ENCODE measurements at regions of chr20 and their contacts with region 1.

Region 1: GRCh38 chr20:10434832-10435812 is at the start of gene SLX4IP:
- DNase-seq: peak; percentile 88
- ATAC-seq: peak; percentile 68
- H3K4me3 Mint-ChIP-seq: peak within 1 kb of the TSS; percentile 78
- H3K27ac Mint-ChIP-seq: peak within 1 kb of the TSS; percentile 87
- H3K4me1 Mint-ChIP-seq: peaks cover 39% of the 10 kb centered on the region
- H3K27me3 Mint-ChIP-seq: no peaks in the 10 kb centered on the region
- total RNA-seq, gene SLX4IP: 7.4 to 7.8 TPM

Region 2: GRCh38 chr20:9903048-9903655 is 532.0 kb before region 1 on chr20:
- CTCF ChIA-PET with region 1: no interaction called
- POLR2A ChIA-PET with region 1: no interaction called
- intact Hi-C with region 1: no loop called
- DNase-seq: peak; percentile 13
- ATAC-seq: no peak
- H3K4me3 Mint-ChIP-seq: no peak overlapping the region
- H3K27ac Mint-ChIP-seq: no peak overlapping the region
- H3K4me1 Mint-ChIP-seq: no peaks in the 10 kb centered on the region
- H3K27me3 Mint-ChIP-seq: no peaks in the 10 kb centered on the region

Region 3: GRCh38 chr20:10034717-10035571 is 400.2 kb before region 1 on chr20 and contains the start of gene ANKEF1:
- CTCF ChIA-PET with region 1: no interaction called
- POLR2A ChIA-PET with region 1: no interaction called
- intact Hi-C with region 1: loop called in 1 of 2 experiments (anchors 10 kb)
- DNase-seq: peak; percentile 76
- ATAC-seq: peak; percentile 92
- H3K4me3 Mint-ChIP-seq: peak within 1 kb of the TSS; percentile 54
- H3K27ac Mint-ChIP-seq: peak within 1 kb of the TSS; percentile 55
- H3K4me1 Mint-ChIP-seq: peaks cover 7% of the 10 kb centered on the region
- H3K27me3 Mint-ChIP-seq: peaks cover 7% of the 10 kb centered on the region
- total RNA-seq, gene ANKEF1: 2.5 to 2.8 TPM

Region 4: DNA sequence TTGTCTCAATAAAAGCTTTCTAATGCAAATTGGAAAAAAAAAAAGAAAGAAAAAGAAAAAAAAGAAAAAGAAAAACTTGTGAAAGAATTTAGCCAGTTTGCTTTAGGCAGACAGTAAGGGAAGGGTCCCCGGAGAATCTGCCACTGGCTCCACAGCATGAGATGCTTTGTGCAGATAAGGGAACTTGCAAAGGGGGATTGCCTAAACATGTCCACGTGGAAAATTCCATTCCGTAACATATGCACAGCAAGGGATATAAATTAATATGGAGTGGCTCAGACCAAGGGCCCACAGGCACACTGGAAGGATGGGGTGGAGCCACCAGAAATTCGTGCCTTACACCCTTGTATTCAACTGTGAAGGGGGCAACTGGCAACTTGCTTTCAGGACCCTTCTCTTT is 46.5 kb before region 1 on chr20:
- CTCF ChIA-PET with region 1: no interaction called
- POLR2A ChIA-PET with region 1: no interaction called
- intact Hi-C with region 1: no loop called
- DNase-seq: no peak
- ATAC-seq: no peak
- H3K4me3 Mint-ChIP-seq: no peak overlapping the region
- H3K27ac Mint-ChIP-seq: no peak overlapping the region
- H3K4me1 Mint-ChIP-seq: no peaks in the 10 kb centered on the region
- H3K27me3 Mint-ChIP-seq: peaks cover 6% of the 10 kb centered on the region

Region 5: DNA sequence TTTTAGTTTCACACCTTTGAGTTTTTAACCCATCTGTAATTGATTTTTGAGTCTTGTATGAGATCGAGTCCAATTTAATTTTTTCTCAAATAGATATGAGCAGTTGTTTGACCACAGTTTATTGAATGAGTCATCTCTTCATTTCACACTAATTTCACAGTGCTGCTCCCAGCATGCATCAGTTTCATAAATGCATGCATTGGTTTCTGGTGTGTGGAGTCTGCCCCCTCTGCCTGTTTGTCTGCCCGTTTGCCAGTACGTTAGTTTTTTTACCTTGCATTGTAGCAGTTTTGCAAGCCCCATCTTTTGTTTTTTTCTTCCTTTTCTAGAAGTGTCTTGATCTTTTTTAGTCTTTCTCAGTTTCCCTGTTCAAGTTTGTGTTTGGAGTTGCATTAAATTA is 11.9 kb after region 1 on chr20:
- CTCF ChIA-PET with region 1: interaction called, 6 read pairs
- POLR2A ChIA-PET with region 1: interaction called, 3 read pairs
- intact Hi-C with region 1: loop called in 1 of 2 experiments (anchors 1 kb)
- DNase-seq: peak; percentile 71
- ATAC-seq: peak; percentile 99
- H3K4me3 Mint-ChIP-seq: peak overlapping the region; percentile 61
- H3K27ac Mint-ChIP-seq: peak overlapping the region; percentile 80
- H3K4me1 Mint-ChIP-seq: peaks cover 27% of the 10 kb centered on the region
- H3K27me3 Mint-ChIP-seq: no peaks in the 10 kb centered on the region

Region 6: DNA sequence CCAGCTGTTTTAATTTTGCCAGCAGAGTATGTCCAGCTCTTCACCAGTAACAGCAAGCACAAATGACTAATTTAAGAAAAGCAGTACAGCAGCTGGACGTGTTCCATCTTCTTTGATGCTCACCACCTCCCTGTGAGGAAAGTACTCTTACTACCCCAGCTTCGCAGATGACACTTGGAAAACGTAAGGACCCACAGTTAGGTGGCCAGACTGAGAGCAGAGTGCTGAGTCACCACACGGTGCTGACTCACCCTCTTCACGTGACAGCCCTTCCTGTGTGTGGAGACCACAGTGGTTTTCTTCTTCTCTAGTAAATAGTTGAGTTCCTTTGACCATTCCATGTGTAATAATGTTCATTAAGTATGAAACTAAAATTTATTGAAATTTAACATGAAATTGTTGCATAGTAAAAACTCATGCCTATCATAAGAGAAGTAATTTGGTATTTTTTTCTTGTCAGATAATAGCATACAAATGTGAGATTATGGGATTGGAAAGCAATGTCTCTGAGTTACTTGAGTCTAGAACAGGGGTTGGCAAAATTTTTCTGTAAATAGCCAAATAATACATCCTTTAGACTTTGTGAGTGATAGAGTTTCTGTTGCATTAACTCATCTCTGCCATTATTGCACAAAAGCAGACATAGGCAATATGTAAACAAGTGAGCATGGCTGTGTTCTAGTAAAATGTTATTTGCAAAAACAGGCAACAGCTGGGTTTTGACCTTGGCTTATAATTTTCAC is 76.6 kb after region 1 on chr20:
- CTCF ChIA-PET with region 1: no interaction called
- POLR2A ChIA-PET with region 1: no interaction called
- intact Hi-C with region 1: loop called in 1 of 2 experiments (anchors 2 kb)
- DNase-seq: peak; percentile 80
- ATAC-seq: peak; percentile 97
- H3K4me3 Mint-ChIP-seq: no peak overlapping the region
- H3K27ac Mint-ChIP-seq: peak overlapping the region; percentile 63
- H3K4me1 Mint-ChIP-seq: peaks cover 27% of the 10 kb centered on the region
- H3K27me3 Mint-ChIP-seq: no peaks in the 10 kb centered on the region

Region 7: GRCh38 chr20:11890331-11891080 is 1455.4 kb after region 1 on chr20:
- CTCF ChIA-PET with region 1: no interaction called
- POLR2A ChIA-PET with region 1: no interaction called
- intact Hi-C with region 1: loop called (anchors 2 to 10 kb)
- DNase-seq: peak; percentile 86
- ATAC-seq: peak; percentile 77
- H3K4me3 Mint-ChIP-seq: peak overlapping the region; percentile 76
- H3K27ac Mint-ChIP-seq: peak overlapping the region; percentile 51
- H3K4me1 Mint-ChIP-seq: peaks cover 13% of the 10 kb centered on the region
- H3K27me3 Mint-ChIP-seq: peaks cover 12% of the 10 kb centered on the region